A549 (cell line): ENCODE measurements at regions of chr15 and their contacts with region 1.

Region 1: DNA sequence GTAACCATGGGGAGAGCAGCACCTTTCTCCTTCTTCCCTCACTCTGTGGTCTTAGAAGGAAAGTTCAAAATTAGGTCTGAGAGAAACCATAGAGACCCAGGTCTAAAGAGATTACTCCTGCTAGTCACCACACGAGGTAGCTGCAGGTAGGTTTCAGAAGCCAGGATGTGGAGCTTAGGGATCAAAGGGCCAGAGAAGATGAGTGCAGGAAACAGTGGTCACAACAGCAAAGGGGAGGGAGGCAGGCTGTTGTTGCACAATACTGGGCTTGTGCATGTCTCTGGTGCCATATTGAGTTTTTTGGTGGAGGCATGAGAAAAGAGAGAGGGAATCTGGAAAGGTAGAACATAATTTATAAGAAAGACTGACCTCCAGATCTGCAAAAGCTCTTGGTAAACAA is 583.7 kb downstream of the AGBL1 start:
- DNase-seq: no peak
- ATAC-seq: no peak
- H3K4me3 ChIP-seq: no peak overlapping the region
- H3K27ac ChIP-seq: no peak overlapping the region
- H3K4me1 ChIP-seq: no peaks in the 10 kb centered on the region
- CTCF ChIP-seq: no peak
- EP300 ChIP-seq: no peak
- POLR2A ChIP-seq: no peak
- RAD21 ChIP-seq: no peak

Region 2: DNA sequence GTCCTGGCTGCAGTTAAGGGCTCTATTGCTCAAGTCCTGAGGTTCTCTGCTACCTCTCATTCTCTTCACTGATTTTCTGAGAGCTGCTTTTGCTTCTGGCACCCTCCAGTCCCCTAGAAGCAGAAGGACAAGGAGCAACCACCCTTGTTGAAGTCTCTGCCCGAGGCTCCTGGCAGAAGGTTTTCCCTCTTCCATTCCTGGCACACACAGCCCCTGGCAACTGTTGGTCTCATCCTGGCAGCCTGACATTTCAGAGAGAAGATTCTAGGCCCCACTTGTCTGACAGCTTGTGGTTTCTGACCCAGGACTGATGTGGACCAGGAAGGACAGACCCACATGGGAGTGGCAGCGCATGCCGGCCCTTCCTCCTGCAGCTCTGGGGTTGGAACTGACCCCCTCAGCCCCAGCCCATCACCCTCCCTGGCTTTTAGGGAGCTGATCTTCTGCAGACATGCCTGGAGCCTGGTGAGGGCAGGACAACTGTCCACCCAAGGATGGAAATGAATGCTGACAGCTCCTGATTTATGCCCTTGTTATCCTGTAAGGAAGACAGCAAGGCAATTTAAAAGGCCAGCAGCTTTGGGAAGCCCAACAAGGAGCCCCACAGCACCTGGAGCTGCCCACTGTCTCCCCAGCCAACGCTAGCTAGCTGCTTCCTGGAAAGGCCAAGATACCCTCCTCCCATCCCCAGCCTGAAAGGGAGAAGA is 1606.2 kb after region 1 on chr15:
- CTCF ChIA-PET with region 1: no interaction called
- POLR2A ChIA-PET with region 1: interaction called, 12 read pairs
- DNase-seq: no peak
- ATAC-seq: no peak
- H3K4me3 ChIP-seq: no peak overlapping the region
- H3K27ac ChIP-seq: peak overlapping the region in 1 of 2 experiments; percentile 0; a peak in 1 of 6 replicates
- H3K4me1 ChIP-seq: peaks cover 10% of the 10 kb centered on the region; the same call in 1 of the 3 replicates
- CTCF ChIP-seq: no peak
- EP300 ChIP-seq: no peak
- POLR2A ChIP-seq: no peak
- RAD21 ChIP-seq: no peak